Activated T-helper 2 cell treated with anti-CD3 and anti-CD28 coated beads, Interferon-gamma antibody, Interleukin-2, Interleukin-4, amounts not matched to agents 10 μg/mL and 5 μg/mL and 100 μg/mL, durations not matched to agents 14 hours and 24 hours and 36 hours (primary cell): ENCODE measurements at regions of chr2 and their contacts with region 1.

Region 1: GRCh38 chr2:237674731-237675276 is 47.4 kb downstream of the LRRFIP1 start:
- DNase-seq: peak; percentile 81
- H3K4me3 Mint-ChIP-seq: peak overlapping the region; percentile 83
- H3K27ac Mint-ChIP-seq: peak overlapping the region; percentile 85
- H3K4me1 Mint-ChIP-seq: peaks cover 53% of the 10 kb centered on the region
- H3K27me3 Mint-ChIP-seq: no peaks in the 10 kb centered on the region

Region 2: GRCh38 chr2:237686659-237687136 is 11.9 kb after region 1 on chr2:
- intact Hi-C with region 1: loop called (anchors 1 kb)
- DNase-seq: no peak
- H3K4me3 Mint-ChIP-seq: no peak overlapping the region
- H3K27ac Mint-ChIP-seq: peak overlapping the region; percentile 50
- H3K4me1 Mint-ChIP-seq: peaks cover 45% of the 10 kb centered on the region
- H3K27me3 Mint-ChIP-seq: no peaks in the 10 kb centered on the region

Region 3: GRCh38 chr2:237731663-237732062 is 56.9 kb after region 1 on chr2:
- intact Hi-C with region 1: loop called (anchors 1 kb)
- DNase-seq: no peak
- H3K4me3 Mint-ChIP-seq: peak overlapping the region; percentile 49
- H3K27ac Mint-ChIP-seq: peak overlapping the region; percentile 91
- H3K4me1 Mint-ChIP-seq: peaks cover 45% of the 10 kb centered on the region
- H3K27me3 Mint-ChIP-seq: no peaks in the 10 kb centered on the region

Region 4: GRCh38 chr2:237752761-237753165 is 78.0 kb after region 1 on chr2:
- intact Hi-C with region 1: loop called (anchors 2 kb)
- DNase-seq: no peak
- H3K4me3 Mint-ChIP-seq: no peak overlapping the region
- H3K27ac Mint-ChIP-seq: peak overlapping the region; percentile 86
- H3K4me1 Mint-ChIP-seq: peaks cover 23% of the 10 kb centered on the region
- H3K27me3 Mint-ChIP-seq: no peaks in the 10 kb centered on the region

Region 5: GRCh38 chr2:238426568-238427434 is 752.0 kb after region 1 on chr2 and contains the start of gene ASB1:
- intact Hi-C with region 1: loop called (anchors 5 kb)
- DNase-seq: peak; percentile 78
- H3K4me3 Mint-ChIP-seq: peak within 1 kb of the TSS; percentile 89
- H3K27ac Mint-ChIP-seq: peak within 1 kb of the TSS; percentile 91
- H3K4me1 Mint-ChIP-seq: peaks cover 25% of the 10 kb centered on the region
- H3K27me3 Mint-ChIP-seq: no peaks in the 10 kb centered on the region
- total RNA-seq, gene ASB1: 36.3 and 37.4 TPM in 2 replicates